Psoas muscle (tissue), 8 donors: ENCODE measurements at regions of chr22 and their contacts with region 1.

Region 1: GRCh38 chr22:31211862-31212730 is at the start of gene LIMK2:
- DNase-seq: peak; percentile 96 to 97
- ATAC-seq: peak; percentile 94 to 97 (median 96)
- H3K4me3 ChIP-seq: peak within 1 kb of the TSS; percentile 96
- H3K27ac ChIP-seq: peak within 1 kb of the TSS; percentile 85
- H3K4me1 ChIP-seq: peaks cover 15% of the 10 kb centered on the region
- H3K27me3 ChIP-seq: no peaks in the 10 kb centered on the region
- CTCF ChIP-seq: peak; percentile 79
- total RNA-seq, gene LIMK2: 12.5 to 73.5 (median 41.1) TPM

Region 2: GRCh38 chr22:31160328-31160978 is 51.6 kb before region 1 on chr22:
- intact Hi-C with region 1: loop called (anchors 5 kb)
- DNase-seq: no peak
- ATAC-seq: peak; percentile 43 to 66 (median 56)
- H3K4me3 ChIP-seq: peak overlapping the region; percentile 91
- H3K27ac ChIP-seq: peak overlapping the region; percentile 95
- H3K4me1 ChIP-seq: peaks cover 26% of the 10 kb centered on the region
- H3K27me3 ChIP-seq: no peaks in the 10 kb centered on the region
- CTCF ChIP-seq: no peak

Region 3: GRCh38 chr22:31272522-31273446 is 60.7 kb after region 1 on chr22:
- intact Hi-C with region 1: loop called (anchors 5 kb)
- DNase-seq: no peak
- ATAC-seq: peak; percentile 61 to 90 (median 74)
- H3K4me3 ChIP-seq: no peak overlapping the region
- H3K27ac ChIP-seq: no peak overlapping the region
- H3K4me1 ChIP-seq: no peaks in the 10 kb centered on the region
- H3K27me3 ChIP-seq: no peaks in the 10 kb centered on the region
- CTCF ChIP-seq: peak; percentile 71